ENCODE measurements at regions of chr13 and their contacts with region 1.

Region 1: DNA sequence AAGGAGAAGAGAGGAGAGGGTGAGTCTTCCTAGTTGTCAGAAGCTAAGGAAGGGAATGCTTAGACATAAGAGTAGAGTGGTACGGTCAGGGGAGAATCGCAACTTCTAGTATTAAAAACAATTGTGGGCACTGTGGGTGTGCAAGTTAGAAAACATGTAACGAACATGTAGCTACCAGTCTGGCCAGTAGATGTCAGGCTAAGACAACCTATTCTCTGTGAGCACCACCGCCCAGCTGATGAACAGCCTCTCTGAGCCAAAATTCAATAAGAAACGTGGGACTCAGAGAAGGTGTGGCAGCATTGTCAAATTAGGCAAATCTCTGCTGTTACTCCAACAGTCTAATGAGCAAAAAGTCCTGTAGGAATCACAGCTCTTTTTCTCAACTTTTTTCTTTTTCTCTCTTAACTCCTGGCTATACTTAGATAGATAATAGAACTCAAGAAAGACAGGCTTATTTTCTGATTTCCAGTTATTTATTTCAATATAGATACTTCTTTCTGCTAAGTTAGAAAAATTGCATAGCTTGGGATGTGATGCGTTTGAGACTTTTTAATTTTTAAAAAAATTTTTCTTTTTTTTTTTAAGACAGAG is 186.2 kb downstream of the USP12 start:
- DNase-seq: peak; percentile 80
- ATAC-seq: peak; percentile 75
- H3K4me3 ChIP-seq: no peak overlapping the region
- H3K27ac ChIP-seq: no peak overlapping the region
- H3K4me1 ChIP-seq: peaks cover 16% of the 10 kb centered on the region
- H3K27me3 ChIP-seq: no peaks in the 10 kb centered on the region
- CTCF ChIP-seq: peak; percentile 92
- POLR2A ChIP-seq: peak; percentile 75
- RAD21 ChIP-seq: peak; percentile 99

Region 2: GRCh38 chr13:26946684-26947343 is 38.6 kb before region 1 on chr13:
- CTCF ChIA-PET with region 1: interaction called, 18 read pairs
- POLR2A ChIA-PET with region 1: no interaction called
- dilution Hi-C with region 1: no loop called
- in situ Hi-C with region 1: no loop called
- intact Hi-C with region 1: loop called (anchors 1 kb)
- DNase-seq: peak; percentile 73
- ATAC-seq: peak; percentile 97
- H3K4me3 ChIP-seq: no peak overlapping the region
- H3K27ac ChIP-seq: no peak overlapping the region
- H3K4me1 ChIP-seq: peaks cover 3% of the 10 kb centered on the region; the same call in 1 of the 2 replicates
- H3K27me3 ChIP-seq: peaks cover 13% of the 10 kb centered on the region
- CTCF ChIP-seq: peak; percentile 93
- POLR2A ChIP-seq: 0 out of 2 replicates have a peak, but pooled peaks have one; percentile 31
- RAD21 ChIP-seq: peak; percentile 95

Region 3: GRCh38 chr13:27112006-27112405 is 126.6 kb after region 1 on chr13:
- CTCF ChIA-PET with region 1: no interaction called
- POLR2A ChIA-PET with region 1: no interaction called
- dilution Hi-C with region 1: no loop called
- in situ Hi-C with region 1: no loop called
- intact Hi-C with region 1: no loop called
- DNase-seq: no peak
- ATAC-seq: no peak
- H3K4me3 ChIP-seq: no peak overlapping the region
- H3K27ac ChIP-seq: no peak overlapping the region
- H3K4me1 ChIP-seq: peaks cover 4% of the 10 kb centered on the region
- H3K27me3 ChIP-seq: no peaks in the 10 kb centered on the region
- CTCF ChIP-seq: no peak
- POLR2A ChIP-seq: no peak
- RAD21 ChIP-seq: no peak

Region 4: GRCh38 chr13:27251166-27252091 is 266.0 kb after region 1 on chr13 and contains the start of gene RPL21:
- CTCF ChIA-PET with region 1: interaction called, 3 read pairs
- POLR2A ChIA-PET with region 1: no interaction called
- dilution Hi-C with region 1: no loop called
- in situ Hi-C with region 1: no loop called
- intact Hi-C with region 1: loop called (anchors 1 kb)
- DNase-seq: peak; percentile 99
- ATAC-seq: peak; percentile 96
- H3K4me3 ChIP-seq: peak within 1 kb of the TSS; percentile 71
- H3K27ac ChIP-seq: peak within 1 kb of the TSS; percentile 88
- H3K4me1 ChIP-seq: no peaks in the 10 kb centered on the region; the same call in 1 of the 2 replicates
- H3K27me3 ChIP-seq: no peaks in the 10 kb centered on the region
- CTCF ChIP-seq: no peak
- POLR2A ChIP-seq: peak; percentile 95
- RAD21 ChIP-seq: peak; percentile 2; the same call in 1 of the 2 replicates
- total RNA-seq, gene RPL21: 1,160 and 1,364 TPM in 2 replicates

Region 5: DNA sequence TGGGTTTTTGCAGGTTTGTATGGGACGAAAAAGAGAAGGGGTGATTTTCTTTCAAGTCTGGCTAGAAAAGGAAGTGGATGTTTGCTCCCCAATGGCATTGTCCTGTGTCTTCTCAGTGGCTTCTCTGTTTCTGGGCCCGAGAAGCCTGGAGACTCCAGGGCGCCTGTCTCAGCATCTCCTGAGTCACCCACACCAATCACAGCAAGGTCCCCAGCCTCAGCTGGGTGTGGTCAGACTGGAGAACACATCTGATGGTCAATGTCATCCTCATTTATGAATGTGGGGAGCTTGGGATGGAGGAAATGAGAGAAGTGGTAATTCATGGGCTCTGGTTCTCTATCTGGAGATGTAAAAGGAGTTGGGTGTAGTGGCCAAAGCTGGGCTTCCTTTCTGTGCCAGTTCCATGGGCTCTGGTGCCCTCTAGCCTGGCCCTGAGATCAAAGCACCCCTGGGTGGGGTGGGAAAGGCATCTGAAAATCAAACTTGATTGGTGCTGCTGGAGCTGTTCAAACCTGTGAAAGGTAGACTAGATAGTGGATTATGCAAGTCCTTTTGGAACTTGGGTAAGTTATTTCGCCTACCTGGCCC is 298.6 kb after region 1 on chr13:
- CTCF ChIA-PET with region 1: interaction called, 4 read pairs
- POLR2A ChIA-PET with region 1: no interaction called
- dilution Hi-C with region 1: no loop called
- in situ Hi-C with region 1: loop called (anchors 10 kb)
- intact Hi-C with region 1: loop called (anchors 1 kb)
- DNase-seq: no peak
- ATAC-seq: peak; percentile 48; the same call in 1 of the 2 replicates
- H3K4me3 ChIP-seq: no peak overlapping the region
- H3K27ac ChIP-seq: no peak overlapping the region
- H3K4me1 ChIP-seq: no peaks in the 10 kb centered on the region; the same call in 1 of the 2 replicates
- H3K27me3 ChIP-seq: peaks cover 8% of the 10 kb centered on the region
- CTCF ChIP-seq: peak; percentile 50
- POLR2A ChIP-seq: no peak
- RAD21 ChIP-seq: peak; percentile 61

Region 6: DNA sequence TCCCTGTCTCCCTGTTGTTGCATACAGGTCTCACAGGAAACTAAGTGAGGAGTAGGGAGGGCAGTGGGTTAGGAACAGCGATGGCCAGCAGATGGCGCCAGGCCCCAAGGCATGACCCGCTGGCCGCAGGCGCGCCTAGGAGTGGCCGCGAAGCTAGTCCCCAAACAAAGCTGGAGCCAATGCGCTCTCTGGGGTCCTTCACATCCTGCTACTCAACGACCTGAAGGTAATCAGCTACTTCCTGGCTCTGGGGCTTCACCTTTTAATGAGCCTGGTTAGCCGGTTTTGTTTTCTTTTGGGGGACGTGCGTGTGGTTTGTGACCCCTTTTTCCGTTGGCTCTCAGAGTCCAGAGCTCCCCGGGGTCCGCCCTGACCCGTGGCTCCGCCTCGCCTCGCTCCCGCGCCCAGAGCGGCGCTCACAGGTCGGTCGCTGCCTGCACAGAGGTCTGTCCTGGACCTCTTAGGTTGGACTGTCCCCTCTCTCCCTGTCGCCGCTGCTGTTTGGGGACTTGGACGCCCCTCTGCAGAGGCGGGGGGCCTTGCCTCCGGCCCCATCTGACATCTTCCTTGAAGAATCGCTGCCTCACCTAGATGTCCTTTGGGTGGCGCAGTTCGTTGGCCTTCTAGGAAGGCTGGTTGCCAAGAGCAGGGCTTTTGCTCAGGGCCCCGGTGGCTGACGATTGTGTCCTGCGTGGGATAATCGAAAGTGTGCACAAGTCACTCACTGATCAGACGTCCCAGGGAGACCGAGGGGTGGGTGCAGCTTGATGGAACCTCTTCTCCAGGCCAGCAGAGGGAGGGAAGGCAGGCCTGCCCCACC is 376.9 kb after region 1 on chr13:
- CTCF ChIA-PET with region 1: interaction called, 27 read pairs
- POLR2A ChIA-PET with region 1: no interaction called
- dilution Hi-C with region 1: no loop called
- in situ Hi-C with region 1: loop called (anchors 5 kb)
- intact Hi-C with region 1: loop called (anchors 1 kb)
- DNase-seq: peak; percentile 71
- ATAC-seq: peak; percentile 97
- H3K4me3 ChIP-seq: peak overlapping the region; percentile 61
- H3K27ac ChIP-seq: peak overlapping the region; percentile 38; the same call in 1 of the 2 replicates
- H3K4me1 ChIP-seq: peaks cover 4% of the 10 kb centered on the region; the same call in 1 of the 2 replicates
- H3K27me3 ChIP-seq: peaks cover 12% of the 10 kb centered on the region
- CTCF ChIP-seq: peak; percentile 95
- POLR2A ChIP-seq: no peak
- RAD21 ChIP-seq: peak; percentile 95

Region 7: DNA sequence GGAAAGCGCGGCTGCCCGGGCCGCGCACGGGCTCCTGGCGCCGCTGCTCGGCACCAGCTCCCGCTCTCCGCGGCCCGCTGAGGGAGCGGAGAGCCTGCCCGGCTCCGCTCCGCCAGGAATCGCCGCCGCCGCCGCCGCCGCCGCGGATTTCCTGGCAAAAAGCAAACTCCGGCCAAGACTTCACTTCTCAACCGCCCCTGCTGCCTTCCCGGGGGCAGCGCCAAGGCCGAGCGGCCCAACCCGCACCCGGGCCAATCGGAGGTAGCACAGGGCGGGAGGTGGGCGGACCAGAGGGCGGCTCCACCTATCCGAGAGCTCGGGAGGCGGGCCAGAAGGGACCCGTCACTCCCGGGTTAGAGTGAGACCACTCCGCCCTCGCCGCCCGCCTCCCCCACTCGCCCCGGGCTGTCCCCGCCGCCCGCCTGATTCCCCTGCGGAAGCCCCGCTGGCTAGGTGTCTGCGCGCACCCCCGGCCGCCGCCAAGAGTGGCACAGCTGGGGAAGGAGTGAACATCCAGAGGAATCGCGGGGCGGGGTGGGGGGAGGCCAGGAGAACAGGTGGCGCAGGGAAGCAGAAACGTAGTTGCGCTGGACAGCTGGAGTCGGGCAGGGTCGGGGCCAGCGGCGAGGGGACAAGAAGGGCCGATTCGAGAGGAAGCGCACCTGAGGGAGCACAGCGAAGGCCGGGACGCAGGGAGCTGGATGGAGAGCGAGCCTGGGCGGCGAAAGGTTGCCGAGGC is 635.2 kb after region 1 on chr13 and contains the start of gene LNX2:
- CTCF ChIA-PET with region 1: no interaction called
- POLR2A ChIA-PET with region 1: no interaction called
- dilution Hi-C with region 1: no loop called
- in situ Hi-C with region 1: loop called (anchors 25 kb)
- intact Hi-C with region 1: no loop called
- DNase-seq: peak; percentile 95
- ATAC-seq: peak; percentile 96
- H3K4me3 ChIP-seq: peak within 1 kb of the TSS; percentile 99
- H3K27ac ChIP-seq: peak within 1 kb of the TSS; percentile 61
- H3K4me1 ChIP-seq: no peaks in the 10 kb centered on the region
- H3K27me3 ChIP-seq: no peaks in the 10 kb centered on the region
- CTCF ChIP-seq: no peak
- POLR2A ChIP-seq: no peak
- RAD21 ChIP-seq: no peak
- total RNA-seq, gene LNX2: 7.2 and 7.8 TPM in 2 replicates

Measured in IMR-90 (cell line).